ENCODE measurements at regions of chr1 and their contacts with region 1.

Region 1: DNA sequence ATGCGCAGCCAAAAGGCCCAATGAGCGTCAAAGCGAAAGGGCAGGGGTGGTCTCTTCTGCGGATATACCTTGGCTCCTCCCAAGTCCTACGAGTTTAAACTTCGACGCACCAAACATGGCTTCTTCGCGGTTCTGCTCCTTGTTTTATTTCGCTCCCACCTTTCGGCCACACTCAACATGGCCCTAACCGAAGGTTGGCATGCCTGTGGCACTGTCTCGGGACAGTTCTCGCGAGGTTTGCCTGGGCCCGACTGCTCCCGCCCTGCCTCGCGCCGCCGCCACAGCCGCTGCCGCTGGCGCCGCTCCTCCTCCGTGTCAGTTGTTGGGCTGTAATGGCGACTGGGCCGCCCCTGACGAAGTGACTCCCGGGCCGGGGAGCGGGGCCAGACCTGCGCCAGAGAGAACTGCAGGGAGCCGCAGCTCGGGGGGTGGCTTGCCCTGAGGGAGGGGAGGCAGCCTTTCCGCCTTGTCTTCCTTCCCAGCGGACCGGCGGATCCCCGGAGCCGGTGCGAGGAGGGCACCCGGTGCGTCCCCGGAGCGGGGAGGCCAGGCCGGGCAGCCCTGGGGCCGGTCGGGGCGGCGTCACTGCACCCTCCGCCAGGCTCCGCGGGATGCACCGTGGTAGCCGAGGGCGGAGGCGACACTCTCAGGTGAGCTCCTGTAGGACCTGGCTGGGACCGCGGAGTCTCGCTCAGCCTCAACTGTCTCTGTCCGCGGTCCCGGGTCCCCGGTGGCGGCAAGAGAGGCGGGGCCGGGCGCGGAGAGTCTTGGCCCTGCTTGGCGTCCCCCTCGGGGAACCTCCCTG is at the start of gene CEP350:
- DNase-seq: peak; percentile 99
- ATAC-seq: peak; percentile 100
- H3K4me3 ChIP-seq: peak within 1 kb of the TSS; percentile 90 to 93
- H3K27ac ChIP-seq: peak within 1 kb of the TSS; percentile 12 to 87
- H3K4me1 ChIP-seq: no peaks in the 10 kb centered on the region
- H3K27me3 ChIP-seq: no peaks in the 10 kb centered on the region
- total RNA-seq, gene CEP350: 52.6 to 61.3 TPM

Region 2: GRCh38 chr1:179882243-179883039 is 72.3 kb before region 1 on chr1 and contains the start of gene TOR1AIP1:
- intact Hi-C with region 1: loop called in 1 of 2 experiments (anchors 1 kb)
- DNase-seq: peak; percentile 99
- ATAC-seq: peak; percentile 98
- H3K4me3 ChIP-seq: peak within 1 kb of the TSS; percentile 55 to 63
- H3K27ac ChIP-seq: peak within 1 kb of the TSS; percentile 25 to 89
- H3K4me1 ChIP-seq: no peaks in the 10 kb centered on the region
- H3K27me3 ChIP-seq: no peaks in the 10 kb centered on the region
- total RNA-seq, gene TOR1AIP1: 68.3 to 68.4 TPM

Region 3: GRCh38 chr1:180003026-180003695 is 48.5 kb after region 1 on chr1:
- intact Hi-C with region 1: loop called in 1 of 2 experiments (anchors 10 kb)
- DNase-seq: no peak
- ATAC-seq: no peak
- H3K4me3 ChIP-seq: no peak overlapping the region
- H3K27ac ChIP-seq: no peak overlapping the region
- H3K4me1 ChIP-seq: peaks cover 0 to 5% of the 10 kb centered on the region in 2 donors
- H3K27me3 ChIP-seq: no peaks in the 10 kb centered on the region